HEK293T (cell line): ENCODE measurements at regions of chr7 and their contacts with region 1.

Region 1: GRCh38 chr7:140425718-140426117 is 21.9 kb downstream of the RAB19 start:
- DNase-seq: no peak

Region 2: DNA sequence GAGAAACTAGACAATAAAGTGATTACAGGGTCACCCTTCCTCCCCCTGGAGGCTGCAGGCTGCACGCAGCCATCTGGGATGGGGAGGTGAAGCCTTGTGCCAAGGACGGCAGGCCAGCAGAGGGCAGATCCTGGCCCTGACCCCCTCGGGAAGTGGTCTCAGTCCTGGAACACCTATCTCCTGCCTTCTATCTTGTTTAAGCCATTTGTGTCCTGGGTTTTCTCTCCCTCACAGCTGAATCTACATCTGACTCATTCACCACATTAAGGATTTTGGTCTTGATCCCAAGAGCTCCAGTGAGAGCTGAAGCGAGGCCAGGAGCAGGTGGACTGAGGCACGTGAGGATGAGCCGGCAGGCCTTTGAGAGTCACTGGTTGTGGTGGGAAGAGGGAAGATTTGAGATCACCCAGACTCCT is 346.6 kb before region 1 on chr7:
- CTCF ChIA-PET with region 1: no interaction called
- POLR2A ChIA-PET with region 1: no interaction called
- DNase-seq: peak; percentile 65

Region 3: DNA sequence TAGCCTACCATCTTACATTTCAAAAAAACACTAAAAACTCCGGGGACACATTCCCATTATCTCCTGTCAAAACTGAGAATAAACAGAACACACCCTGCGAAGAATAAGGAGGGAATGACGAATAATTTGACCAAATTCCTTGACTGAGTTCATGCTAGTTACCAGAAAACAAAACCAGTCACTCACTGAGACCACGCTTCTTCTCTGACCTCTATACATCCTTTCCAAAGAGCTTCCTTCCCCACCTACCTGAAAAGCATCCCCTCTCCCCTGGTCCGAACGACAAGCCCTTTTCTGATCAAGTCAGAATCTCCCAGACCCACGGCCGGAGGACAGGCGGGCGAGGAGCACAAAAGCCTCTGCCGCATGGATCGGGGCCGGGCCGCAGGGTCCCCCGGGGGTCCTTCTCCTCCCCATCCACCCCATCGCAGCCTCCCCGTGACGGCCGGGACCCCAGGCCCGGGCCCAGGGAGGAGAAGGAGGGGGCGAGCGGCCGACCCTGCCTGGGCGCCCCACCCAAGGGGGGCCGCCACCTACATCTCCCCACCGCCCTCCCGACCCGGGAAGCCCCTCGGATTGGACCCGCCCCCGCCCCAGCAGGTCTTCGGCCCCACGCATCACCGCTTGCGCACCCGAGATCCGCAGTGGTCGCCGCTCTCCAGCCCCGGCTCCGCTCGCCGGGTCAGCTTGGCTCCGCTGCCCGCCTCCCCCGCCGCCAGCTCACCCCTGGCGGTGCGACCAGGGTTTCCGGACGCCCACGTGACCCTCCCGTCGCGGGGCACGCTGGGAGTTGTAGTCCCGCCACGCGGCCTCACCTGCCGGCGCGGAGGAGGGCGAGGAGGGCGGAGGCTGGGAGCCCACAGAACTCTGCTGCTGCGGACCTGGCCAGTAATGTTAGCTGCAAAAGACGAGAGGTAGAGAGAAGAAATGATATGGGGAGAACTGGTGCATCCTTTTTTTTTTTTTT is 27.7 kb before region 1 on chr7 and contains the start of gene SLC37A3:
- CTCF ChIA-PET with region 1: interaction called, 10 read pairs
- POLR2A ChIA-PET with region 1: no interaction called
- DNase-seq: peak; percentile 99